RWPE1 (cell line): ENCODE measurements at regions of chr6 and their contacts with region 1.

Region 1: DNA sequence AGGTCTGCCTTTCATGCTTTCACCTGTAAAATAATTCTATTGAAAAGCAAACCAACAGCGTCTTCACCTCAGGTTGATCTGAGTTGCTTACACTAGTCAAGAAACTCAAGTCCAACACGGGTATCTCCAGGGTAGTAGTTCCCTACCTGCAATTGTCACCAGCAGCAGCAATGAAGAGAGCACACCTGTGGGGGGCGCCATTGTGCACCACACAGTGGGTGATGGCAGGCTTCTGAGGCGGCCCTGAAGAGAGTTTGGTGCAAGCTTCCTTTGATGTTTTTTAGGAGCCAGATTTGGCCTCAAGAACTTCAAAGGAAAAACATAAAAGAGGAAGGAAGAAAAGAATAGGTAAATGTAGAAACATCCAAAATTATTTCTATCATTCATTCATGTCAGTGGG is 45.1 kb downstream of the KIAA0319 start:
- DNase-seq: no peak
- H3K27ac ChIP-seq: no peak overlapping the region
- CTCF ChIP-seq: no peak

Region 2: GRCh38 chr6:24574809-24575208 is 26.1 kb before region 1 on chr6:
- CTCF ChIA-PET with region 1: interaction called, 10 read pairs
- POLR2A ChIA-PET with region 1: no interaction called
- DNase-seq: no peak
- H3K27ac ChIP-seq: no peak overlapping the region
- CTCF ChIP-seq: no peak

Region 3: DNA sequence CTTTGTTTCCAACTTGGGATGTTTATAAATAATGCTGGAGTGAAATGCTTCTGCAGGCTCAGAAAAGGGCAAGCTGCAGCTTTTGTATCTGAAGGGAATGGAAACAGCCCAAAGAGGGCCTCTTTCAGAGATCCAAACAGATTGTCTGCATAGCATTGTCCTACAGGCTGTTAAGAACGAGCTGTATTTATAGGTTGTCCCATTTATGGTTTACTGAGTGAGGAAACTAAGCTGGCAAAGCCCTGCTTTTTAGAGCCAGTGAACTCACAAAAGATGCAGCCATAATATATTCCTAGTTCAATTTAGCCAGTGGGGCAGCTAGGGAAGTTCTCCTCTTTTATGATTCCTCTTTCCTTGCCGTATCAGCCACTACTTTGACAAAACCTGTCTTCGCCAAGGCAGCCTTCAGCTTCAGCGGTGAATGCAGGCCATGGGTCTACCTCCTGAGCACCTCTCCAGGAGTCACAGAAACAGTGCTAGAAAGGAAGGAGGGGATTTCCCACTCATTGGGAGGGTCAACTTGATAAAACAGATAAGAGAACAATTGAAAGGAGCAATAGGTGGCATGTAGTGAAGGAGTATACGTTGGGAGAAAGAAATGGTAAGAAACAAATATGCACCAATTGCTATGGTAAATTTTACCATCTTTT is 30.1 kb after region 1 on chr6:
- CTCF ChIA-PET with region 1: no interaction called
- POLR2A ChIA-PET with region 1: no interaction called
- DNase-seq: no peak
- H3K27ac ChIP-seq: no peak overlapping the region
- CTCF ChIP-seq: no peak